PC-9 (cell line): ENCODE measurements at regions of chr7 and their contacts with region 1.

Region 1: DNA sequence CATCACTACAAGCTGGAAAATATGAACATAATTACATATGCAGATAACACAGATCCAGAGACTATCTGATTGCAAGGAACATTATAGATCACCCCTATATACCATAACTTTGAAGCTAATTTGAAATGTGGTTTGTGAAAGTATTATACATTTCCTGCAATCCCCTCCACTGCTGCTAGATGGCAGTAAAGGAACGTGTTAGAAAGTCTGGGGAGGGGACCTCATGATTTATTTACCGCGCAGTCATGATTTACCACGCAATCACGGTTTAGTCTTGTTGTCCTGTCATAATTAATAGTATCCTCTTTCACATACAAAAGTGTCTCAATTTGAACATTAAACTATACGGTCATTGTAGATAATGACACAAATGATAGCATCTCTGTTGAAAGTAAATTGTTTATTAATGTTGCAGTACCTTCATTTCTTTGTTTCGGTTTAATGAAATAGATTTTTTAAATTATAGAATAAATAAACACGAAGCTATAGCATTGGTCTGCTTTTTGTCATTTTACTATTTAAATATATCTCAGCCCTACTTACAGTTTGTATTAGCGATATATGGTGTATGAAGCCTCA is 145.3 kb upstream of the PRSS1 start:
- DNase-seq: peak; percentile 51 to 65
- H3K4me3 ChIP-seq: peak overlapping the region; percentile 25; the same call in 1 of the 2 replicates
- H3K27ac ChIP-seq: no peak overlapping the region
- H3K4me1 ChIP-seq: peaks cover 18% of the 10 kb centered on the region
- H3K27me3 ChIP-seq: no peaks in the 10 kb centered on the region
- CTCF ChIP-seq: peak; percentile 97

Region 2: DNA sequence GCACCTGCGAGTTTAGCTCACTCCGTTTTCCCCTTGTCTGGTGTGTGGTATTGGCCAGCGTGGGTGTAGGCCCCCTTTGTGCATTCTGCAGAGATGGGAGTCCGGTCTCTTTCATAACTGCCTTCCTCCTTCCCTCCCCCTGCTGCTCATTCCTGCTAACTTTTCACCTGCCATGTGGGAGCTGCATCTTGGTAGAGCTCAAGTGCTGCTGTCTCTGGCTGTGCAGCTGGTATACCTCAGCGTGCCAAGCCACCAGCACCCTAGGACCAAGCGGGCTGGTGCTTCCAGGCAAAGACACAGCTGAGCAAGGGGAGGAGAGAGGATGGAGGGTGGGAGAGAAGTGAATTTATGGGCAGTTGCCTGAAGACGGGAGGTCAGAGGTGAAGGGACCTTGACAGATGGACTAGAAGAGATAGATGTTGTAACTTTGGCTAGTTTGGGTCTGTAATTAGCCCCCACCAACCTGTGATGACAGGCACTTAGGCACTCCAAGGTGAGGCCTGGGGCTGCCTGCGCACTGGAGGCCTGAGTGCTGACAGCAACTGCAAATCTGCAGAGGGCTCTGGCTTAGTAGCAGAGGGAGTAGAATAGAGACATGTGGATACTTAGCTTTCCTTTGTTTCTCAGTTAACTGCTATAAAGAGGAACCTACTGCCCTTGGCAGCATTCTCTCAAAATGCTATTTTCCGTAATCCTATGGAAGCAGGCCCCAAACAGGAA is 1201.5 kb before region 1 on chr7:
- CTCF ChIA-PET with region 1: no interaction called
- POLR2A ChIA-PET with region 1: no interaction called
- intact Hi-C with region 1: no loop called
- DNase-seq: no peak
- H3K4me3 ChIP-seq: no peak overlapping the region
- H3K27ac ChIP-seq: no peak overlapping the region
- H3K4me1 ChIP-seq: no peaks in the 10 kb centered on the region
- H3K27me3 ChIP-seq: peaks cover 85% of the 10 kb centered on the region
- CTCF ChIP-seq: no peak

Region 3: DNA sequence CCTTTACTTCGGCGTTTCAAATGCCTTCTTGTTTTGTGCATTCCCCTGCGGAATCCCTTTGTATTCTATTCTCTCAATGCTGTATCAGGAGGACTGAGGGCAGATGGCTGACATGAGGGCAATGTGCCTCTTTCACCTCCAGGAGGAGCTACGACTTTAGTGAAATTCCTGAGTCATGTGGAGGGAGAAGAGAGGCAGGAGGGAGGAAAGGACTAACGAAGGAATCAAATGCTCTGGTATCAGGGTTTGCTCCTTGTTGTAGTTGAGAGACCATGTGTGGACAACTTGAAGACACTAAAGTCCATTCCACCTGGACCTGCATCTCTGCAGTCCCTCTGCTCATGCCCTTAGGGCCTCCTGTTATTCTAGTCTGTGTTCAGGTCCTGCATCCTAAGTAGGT is 305.9 kb before region 1 on chr7:
- CTCF ChIA-PET with region 1: no interaction called
- POLR2A ChIA-PET with region 1: no interaction called
- intact Hi-C with region 1: no loop called
- DNase-seq: peak in 1 of 2 experiments; percentile 0
- H3K4me3 ChIP-seq: no peak overlapping the region
- H3K27ac ChIP-seq: no peak overlapping the region
- H3K4me1 ChIP-seq: no peaks in the 10 kb centered on the region
- H3K27me3 ChIP-seq: no peaks in the 10 kb centered on the region
- CTCF ChIP-seq: peak; percentile 57; the same call in 1 of the 2 replicates

Region 4: GRCh38 chr7:142405122-142405765 is 198.7 kb before region 1 on chr7:
- CTCF ChIA-PET with region 1: no interaction called
- POLR2A ChIA-PET with region 1: interaction called, 11 read pairs
- intact Hi-C with region 1: no loop called
- DNase-seq: no peak
- H3K4me3 ChIP-seq: no peak overlapping the region
- H3K27ac ChIP-seq: no peak overlapping the region
- H3K4me1 ChIP-seq: no peaks in the 10 kb centered on the region
- H3K27me3 ChIP-seq: no peaks in the 10 kb centered on the region
- CTCF ChIP-seq: no peak

Region 5: DNA sequence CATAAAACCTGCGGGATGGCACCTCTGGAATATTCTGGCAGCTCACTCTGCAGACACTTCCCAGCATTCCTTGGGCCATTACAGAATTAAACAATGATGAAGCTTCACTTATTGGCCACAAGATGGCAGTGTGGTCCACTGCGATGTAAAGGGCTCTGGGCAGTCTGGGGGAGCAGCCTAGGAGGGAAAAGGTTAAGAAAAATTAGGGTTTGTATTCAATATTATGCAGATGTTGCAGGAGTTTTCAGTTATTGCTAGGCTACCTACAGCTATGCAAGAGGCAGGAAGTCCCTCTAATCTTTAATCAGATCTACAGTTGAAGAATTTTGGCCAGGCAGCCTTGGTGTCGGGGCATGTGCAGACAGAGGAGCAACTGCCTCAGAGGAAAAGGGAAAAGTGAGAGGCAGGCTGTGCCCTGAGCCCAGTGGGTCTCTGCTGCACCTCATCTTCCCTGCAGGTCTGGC is 87.9 kb before region 1 on chr7:
- CTCF ChIA-PET with region 1: interaction called, 3 read pairs
- POLR2A ChIA-PET with region 1: no interaction called
- intact Hi-C with region 1: loop called (anchors 5 kb)
- DNase-seq: peak; percentile 72 to 87
- H3K4me3 ChIP-seq: no peak overlapping the region
- H3K27ac ChIP-seq: peak overlapping the region; percentile 79
- H3K4me1 ChIP-seq: peaks cover 48% of the 10 kb centered on the region
- H3K27me3 ChIP-seq: no peaks in the 10 kb centered on the region
- CTCF ChIP-seq: peak; percentile 97

Region 6: GRCh38 chr7:142587578-142588191 is 16.3 kb before region 1 on chr7:
- CTCF ChIA-PET with region 1: interaction called, 11 read pairs
- POLR2A ChIA-PET with region 1: no interaction called
- intact Hi-C with region 1: no loop called
- DNase-seq: peak; percentile 30 to 77
- H3K4me3 ChIP-seq: no peak overlapping the region
- H3K27ac ChIP-seq: 0 out of 2 replicates have a peak overlapping the region, but pooled peaks have one; percentile 27
- H3K4me1 ChIP-seq: peaks cover 26% of the 10 kb centered on the region
- H3K27me3 ChIP-seq: no peaks in the 10 kb centered on the region
- CTCF ChIP-seq: peak; percentile 78

Region 7: GRCh38 chr7:142646386-142647140 is 42.6 kb after region 1 on chr7:
- CTCF ChIA-PET with region 1: no interaction called
- POLR2A ChIA-PET with region 1: no interaction called
- intact Hi-C with region 1: no loop called
- DNase-seq: no peak
- H3K4me3 ChIP-seq: no peak overlapping the region
- H3K27ac ChIP-seq: no peak overlapping the region
- H3K4me1 ChIP-seq: no peaks in the 10 kb centered on the region
- H3K27me3 ChIP-seq: no peaks in the 10 kb centered on the region
- CTCF ChIP-seq: no peak

Region 8: DNA sequence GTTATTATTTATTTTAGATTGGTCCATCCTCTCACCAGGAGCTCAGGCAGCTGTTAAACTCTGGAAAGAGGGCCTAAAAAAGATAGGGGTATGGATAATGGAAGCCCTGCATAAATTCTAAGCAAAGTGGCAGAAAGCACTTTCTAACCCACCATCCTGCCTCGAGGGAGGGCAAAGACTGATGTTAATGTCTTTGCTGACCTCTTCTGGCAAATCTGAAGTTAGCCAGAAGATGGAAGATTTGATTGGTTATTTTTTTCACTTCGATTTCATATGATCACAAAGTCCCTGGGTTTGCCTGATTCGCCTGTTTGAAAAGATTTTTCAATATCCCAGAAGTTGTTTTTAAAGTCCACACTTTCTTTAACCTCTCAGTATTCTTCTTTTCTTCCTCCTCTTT is 398.1 kb after region 1 on chr7:
- CTCF ChIA-PET with region 1: no interaction called
- POLR2A ChIA-PET with region 1: no interaction called
- intact Hi-C with region 1: loop called (anchors 1 kb)
- DNase-seq: peak in 1 of 2 experiments; percentile 12
- H3K4me3 ChIP-seq: no peak overlapping the region
- H3K27ac ChIP-seq: no peak overlapping the region
- H3K4me1 ChIP-seq: peaks cover 4% of the 10 kb centered on the region; the same call in 1 of the 2 replicates
- H3K27me3 ChIP-seq: no peaks in the 10 kb centered on the region
- CTCF ChIP-seq: peak; percentile 73